ENCODE measurements at regions of chr11 and their contacts with region 1.

Region 1: DNA sequence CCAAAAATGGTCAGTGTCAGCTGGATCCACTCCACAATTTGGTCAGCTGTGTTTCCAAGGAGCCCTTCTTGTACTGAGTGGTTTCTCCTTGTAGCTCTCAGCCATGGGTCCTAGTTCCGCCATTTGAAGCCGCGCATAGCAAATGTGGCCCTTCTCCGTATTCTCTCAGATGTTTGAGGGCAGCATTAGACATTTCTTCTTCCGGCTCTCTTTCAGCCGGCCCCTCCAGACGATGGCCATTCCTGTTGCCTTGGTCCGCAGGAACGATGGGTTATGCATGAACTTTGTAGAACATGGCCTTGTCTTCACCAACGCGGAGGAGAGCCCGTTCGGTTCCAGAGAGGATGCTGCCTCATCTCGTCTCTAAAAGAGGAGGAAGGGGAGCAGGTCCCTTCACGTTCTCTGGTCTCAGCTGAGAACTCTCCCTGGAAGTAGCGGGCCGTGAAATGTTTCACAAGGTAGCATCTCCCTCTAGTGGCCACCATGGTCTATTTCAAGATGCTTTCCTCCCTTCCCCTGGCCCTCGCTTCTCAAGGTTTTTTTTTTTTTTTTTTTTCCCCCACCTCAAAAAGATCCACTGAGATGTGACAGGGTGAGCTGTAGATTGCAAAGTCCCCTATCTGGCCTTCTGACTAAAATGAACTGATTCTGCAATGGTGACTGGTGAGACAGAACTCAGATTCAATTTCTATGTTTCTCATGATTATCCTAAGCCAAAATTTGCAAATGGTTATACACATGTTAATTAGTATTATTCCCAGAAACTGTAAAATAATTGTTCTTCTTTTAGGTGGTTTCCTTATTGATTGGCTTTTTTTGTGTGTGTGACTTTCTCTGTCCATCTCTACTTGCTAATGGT is 19.8 kb upstream of the PLET1 start:
- DNase-seq: peak; percentile 73
- H3K4me3 Mint-ChIP-seq: peak overlapping the region; percentile 84
- H3K27ac Mint-ChIP-seq: peak overlapping the region; percentile 65
- H3K4me1 Mint-ChIP-seq: peaks cover 15% of the 10 kb centered on the region
- H3K27me3 Mint-ChIP-seq: no peaks in the 10 kb centered on the region

Region 2: DNA sequence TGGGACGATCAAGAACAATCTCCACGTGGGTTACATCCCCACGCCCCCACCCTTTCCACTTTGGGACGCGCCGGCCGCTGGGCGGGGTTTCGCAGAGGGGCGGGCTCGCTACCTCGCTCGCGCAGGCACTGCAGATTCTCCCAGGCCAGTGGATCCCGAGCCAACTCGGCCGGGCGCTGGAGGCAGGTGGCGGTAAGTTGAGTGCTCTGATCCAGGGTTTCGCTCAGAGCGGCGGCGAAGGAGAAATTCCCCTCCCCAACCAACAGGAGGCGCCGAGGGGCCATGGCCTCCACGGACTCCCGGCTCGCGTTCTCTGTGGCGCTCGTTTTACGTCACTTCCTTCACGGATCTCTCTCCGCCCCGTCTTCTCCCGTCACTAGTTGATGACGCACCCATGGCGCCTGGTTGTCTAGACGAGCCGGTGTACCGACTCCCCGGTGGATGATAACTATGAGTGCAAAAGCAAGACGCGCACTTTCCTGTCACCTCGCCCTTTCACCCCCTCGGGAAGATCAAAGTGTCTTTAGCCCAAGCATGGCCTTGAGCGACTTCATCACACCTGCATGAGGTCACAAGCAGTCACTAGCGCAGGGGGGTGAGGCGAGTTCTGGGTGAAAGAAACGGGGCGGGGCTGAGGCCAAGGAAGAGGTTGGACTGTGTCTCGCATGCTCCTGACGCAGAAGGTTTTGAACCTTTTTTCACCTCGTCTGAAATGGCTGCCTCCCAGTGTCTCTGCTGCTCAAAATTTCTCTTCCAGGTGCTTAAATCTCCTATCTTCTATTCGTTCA is 401.5 kb before region 1 on chr11 and contains the starts of genes CFAP68 and FDXACB1:
- CTCF ChIA-PET with region 1: interaction called, 3 read pairs
- POLR2A ChIA-PET with region 1: no interaction called
- intact Hi-C with region 1: loop called (anchors 1 kb)
- DNase-seq: peak; percentile 96
- H3K4me3 Mint-ChIP-seq: peak within 1 kb of the TSS; percentile 82
- H3K27ac Mint-ChIP-seq: peak within 1 kb of the TSS; percentile 95
- H3K4me1 Mint-ChIP-seq: peaks cover 21% of the 10 kb centered on the region
- H3K27me3 Mint-ChIP-seq: no peaks in the 10 kb centered on the region
- total RNA-seq, gene CFAP68: 29.9 to 33.6 TPM
- total RNA-seq, gene FDXACB1: 5.2 to 5.6 TPM

Region 3: GRCh38 chr11:112113539-112114457 is 166.7 kb before region 1 on chr11:
- CTCF ChIA-PET with region 1: interaction called, 54 read pairs
- POLR2A ChIA-PET with region 1: no interaction called
- intact Hi-C with region 1: loop called (anchors 1 kb)
- DNase-seq: no peak
- H3K4me3 Mint-ChIP-seq: no peak overlapping the region
- H3K27ac Mint-ChIP-seq: no peak overlapping the region
- H3K4me1 Mint-ChIP-seq: peaks cover 2% of the 10 kb centered on the region
- H3K27me3 Mint-ChIP-seq: no peaks in the 10 kb centered on the region

Region 4: GRCh38 chr11:112226062-112226830 is 54.3 kb before region 1 on chr11 and contains the start of gene PTS:
- CTCF ChIA-PET with region 1: interaction called, 238 read pairs
- POLR2A ChIA-PET with region 1: interaction called, 3 read pairs
- intact Hi-C with region 1: loop called (anchors 2 kb)
- DNase-seq: peak; percentile 90
- H3K4me3 Mint-ChIP-seq: peak within 1 kb of the TSS; percentile 86
- H3K27ac Mint-ChIP-seq: peak within 1 kb of the TSS; percentile 92
- H3K4me1 Mint-ChIP-seq: peaks cover 21% of the 10 kb centered on the region
- H3K27me3 Mint-ChIP-seq: no peaks in the 10 kb centered on the region
- total RNA-seq, gene PTS: 28.1 to 28.5 TPM

Region 5: DNA sequence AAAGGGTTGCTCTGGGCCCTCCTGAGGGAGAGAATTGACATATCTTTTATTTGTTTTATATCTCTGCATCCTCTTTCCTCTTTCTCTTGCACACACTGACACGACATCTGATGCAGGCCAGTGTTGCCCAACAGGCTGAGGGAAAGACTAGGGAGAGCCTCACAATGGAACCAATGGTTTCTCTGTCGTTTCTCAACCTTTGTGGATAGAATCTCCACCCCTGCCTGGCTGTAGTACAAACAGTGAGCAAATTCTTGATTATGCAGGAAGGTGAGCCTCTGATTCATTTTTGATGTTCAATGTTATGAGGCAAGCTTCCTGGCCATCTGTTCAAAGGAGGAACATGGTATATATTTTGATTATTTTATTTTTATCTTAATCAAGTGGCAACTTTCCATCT is 29.9 kb after region 1 on chr11:
- CTCF ChIA-PET with region 1: no interaction called
- POLR2A ChIA-PET with region 1: no interaction called
- intact Hi-C with region 1: no loop called
- DNase-seq: no peak
- H3K4me3 Mint-ChIP-seq: no peak overlapping the region
- H3K27ac Mint-ChIP-seq: no peak overlapping the region
- H3K4me1 Mint-ChIP-seq: no peaks in the 10 kb centered on the region
- H3K27me3 Mint-ChIP-seq: no peaks in the 10 kb centered on the region

Region 6: GRCh38 chr11:112555491-112556364 is 275.2 kb after region 1 on chr11:
- CTCF ChIA-PET with region 1: interaction called, 34 read pairs
- POLR2A ChIA-PET with region 1: no interaction called
- intact Hi-C with region 1: no loop called
- DNase-seq: peak; percentile 82
- H3K4me3 Mint-ChIP-seq: no peak overlapping the region
- H3K27ac Mint-ChIP-seq: no peak overlapping the region
- H3K4me1 Mint-ChIP-seq: peaks cover 4% of the 10 kb centered on the region
- H3K27me3 Mint-ChIP-seq: peaks cover 1% of the 10 kb centered on the region

Measured in activated CD4-positive, alpha-beta memory T cell treated with anti-CD3 and anti-CD28 coated beads for 36 hours (primary cell).